ENCODE measurements at regions of chr2 and their contacts with region 1.

Region 1: DNA sequence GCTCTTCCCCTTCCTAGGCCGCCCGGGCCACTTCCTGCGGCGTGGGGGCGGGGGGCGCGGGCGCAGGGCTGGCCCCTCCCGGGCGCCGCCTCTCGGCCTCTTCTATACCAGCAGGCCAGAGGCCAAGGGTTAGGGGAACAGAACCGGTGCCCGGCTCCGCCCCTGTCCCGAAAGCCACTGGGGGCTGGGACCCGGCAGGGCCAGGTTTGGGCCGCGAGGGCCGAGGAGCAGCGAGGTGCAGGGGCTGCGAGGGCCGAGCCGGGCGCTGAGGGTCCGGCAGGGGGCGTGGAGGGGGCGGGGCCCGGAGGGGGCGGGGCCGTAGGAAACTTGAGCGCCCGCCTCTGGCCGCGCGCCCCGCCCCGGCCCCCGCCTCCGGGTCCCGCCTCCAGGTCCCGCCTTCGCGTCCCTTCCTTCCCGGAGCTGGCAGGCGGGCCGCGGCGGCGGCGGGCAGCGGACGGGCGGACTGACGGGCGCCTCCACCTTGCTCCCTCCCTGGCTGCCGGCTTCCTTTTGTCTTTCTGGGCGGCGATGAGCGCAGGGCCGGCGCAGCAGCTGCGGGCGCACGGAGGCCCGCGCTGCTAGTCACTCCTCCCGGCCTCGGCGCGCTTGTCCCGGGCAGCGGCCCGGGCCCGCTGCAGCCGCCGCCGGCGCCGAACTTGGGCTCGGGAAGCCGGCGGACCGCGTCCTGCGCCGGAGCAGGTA is at the start of gene HPCAL1:
- DNase-seq: peak; percentile 93
- ATAC-seq: peak; percentile 71
- H3K4me3 Mint-ChIP-seq: peak within 1 kb of the TSS; percentile 99
- H3K27ac Mint-ChIP-seq: peak within 1 kb of the TSS; percentile 91
- H3K4me1 Mint-ChIP-seq: peaks cover 65% of the 10 kb centered on the region
- H3K27me3 Mint-ChIP-seq: no peaks in the 10 kb centered on the region
- total RNA-seq, gene HPCAL1: 75.8 to 77.1 TPM

Region 2: GRCh38 chr2:10239561-10239967 is 63.1 kb before region 1 on chr2:
- POLR2A ChIA-PET with region 1: no interaction called
- DNase-seq: no peak
- ATAC-seq: no peak
- H3K4me3 Mint-ChIP-seq: no peak overlapping the region
- H3K27ac Mint-ChIP-seq: no peak overlapping the region
- H3K4me1 Mint-ChIP-seq: peaks cover 3% of the 10 kb centered on the region
- H3K27me3 Mint-ChIP-seq: no peaks in the 10 kb centered on the region

Region 3: GRCh38 chr2:10254373-10255151 is 48.1 kb before region 1 on chr2:
- POLR2A ChIA-PET with region 1: no interaction called
- DNase-seq: no peak
- ATAC-seq: no peak
- H3K4me3 Mint-ChIP-seq: no peak overlapping the region
- H3K27ac Mint-ChIP-seq: no peak overlapping the region
- H3K4me1 Mint-ChIP-seq: peaks cover 3% of the 10 kb centered on the region
- H3K27me3 Mint-ChIP-seq: peaks cover 10% of the 10 kb centered on the region

Region 4: GRCh38 chr2:10331027-10331701 is 28.5 kb after region 1 on chr2:
- POLR2A ChIA-PET with region 1: interaction called, 107 read pairs
- DNase-seq: peak; percentile 74
- ATAC-seq: peak; percentile 72
- H3K4me3 Mint-ChIP-seq: peak overlapping the region; percentile 91
- H3K27ac Mint-ChIP-seq: peak overlapping the region; percentile 94
- H3K4me1 Mint-ChIP-seq: peaks cover 50% of the 10 kb centered on the region
- H3K27me3 Mint-ChIP-seq: no peaks in the 10 kb centered on the region

Region 5: GRCh38 chr2:10408649-10409579 is 106.3 kb after region 1 on chr2:
- POLR2A ChIA-PET with region 1: interaction called, 31 read pairs
- DNase-seq: peak; percentile 83
- ATAC-seq: peak; percentile 72
- H3K4me3 Mint-ChIP-seq: peak overlapping the region; percentile 86
- H3K27ac Mint-ChIP-seq: peak overlapping the region; percentile 95
- H3K4me1 Mint-ChIP-seq: peaks cover 32% of the 10 kb centered on the region
- H3K27me3 Mint-ChIP-seq: no peaks in the 10 kb centered on the region

Measured in activated naive CD8-positive, alpha-beta T cell treated with anti-CD3 and anti-CD28 coated beads, Interleukin-2, amount 10 ng/mL, durations not matched to agents 7 days and 5 days (primary cell).